ENCODE measurements at regions of chr9 and their contacts with region 1.

Region 1: DNA sequence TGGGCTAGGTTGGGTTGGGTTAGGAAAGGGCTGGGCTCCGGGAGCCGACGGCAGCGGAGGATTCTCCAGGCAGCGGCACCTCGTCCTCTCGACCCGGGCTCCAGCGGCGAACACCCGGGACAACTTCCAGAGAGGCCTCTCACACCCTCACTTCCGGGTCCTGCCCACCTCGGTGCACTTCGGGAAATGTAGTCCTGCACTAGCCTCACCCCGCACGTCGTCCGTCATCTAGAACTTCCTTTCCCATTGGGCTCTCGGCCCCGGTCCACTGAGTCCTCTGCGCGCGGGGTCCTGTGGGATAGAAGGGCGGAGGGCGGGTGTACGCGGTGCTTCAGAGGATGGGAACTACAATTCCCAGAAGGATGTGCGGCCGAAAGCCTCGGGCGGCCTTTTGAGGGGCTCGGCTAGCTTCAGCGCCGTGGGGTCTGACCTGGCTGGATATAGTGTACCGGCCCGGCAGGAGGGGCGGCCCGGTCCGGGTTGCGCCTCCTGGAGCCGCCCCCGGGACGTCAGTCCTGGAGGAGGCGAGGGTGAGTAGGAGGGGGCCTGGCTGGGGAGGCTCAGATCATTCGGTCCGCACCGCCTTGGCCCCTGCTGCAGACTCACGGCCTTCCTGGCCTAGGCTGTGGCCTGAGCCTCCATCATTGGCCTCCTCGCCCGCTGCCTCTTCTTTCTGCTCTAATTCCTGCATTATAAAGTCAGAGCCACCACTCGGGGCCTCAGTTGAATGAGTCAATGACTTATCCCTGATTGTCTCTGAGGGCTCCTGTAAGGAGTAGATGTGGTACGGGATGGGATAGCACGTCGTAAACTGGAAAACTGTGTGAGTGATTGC is at the starts of genes ERP44 and INVS:
- DNase-seq: peak; percentile 99
- H3K4me3 ChIP-seq: peak within 1 kb of the TSS; percentile 63 to 85 (median 76)
- H3K27ac ChIP-seq: peak within 1 kb of the TSS; percentile 74
- H3K4me1 ChIP-seq: peaks cover 20% of the 10 kb centered on the region
- H3K27me3 ChIP-seq: no peaks in the 10 kb centered on the region
- CTCF ChIP-seq: no peak
- POLR2A ChIP-seq: peak; percentile 93
- total RNA-seq, gene ERP44: 19.3 and 21.4 TPM in 2 replicates
- total RNA-seq, gene INVS: 17.9 and 20.3 TPM in 2 replicates

Region 2: GRCh38 chr9:99221621-99222415 is 877.3 kb before region 1 on chr9 and contains the starts of genes ALG2 and SEC61B:
- CTCF ChIA-PET with region 1: no interaction called
- POLR2A ChIA-PET with region 1: interaction called, 5 read pairs
- dilution Hi-C with region 1: no loop called
- intact Hi-C with region 1: loop called (anchors 1 kb)
- DNase-seq: peak; percentile 97
- H3K4me3 ChIP-seq: peak within 1 kb of the TSS; percentile 55 to 98 (median 91)
- H3K27ac ChIP-seq: peak within 1 kb of the TSS; percentile 99
- H3K4me1 ChIP-seq: peaks cover 28% of the 10 kb centered on the region
- H3K27me3 ChIP-seq: no peaks in the 10 kb centered on the region
- CTCF ChIP-seq: no peak
- POLR2A ChIP-seq: peak; percentile 93
- total RNA-seq, gene ALG2: 31.4 and 32.4 TPM in 2 replicates
- total RNA-seq, gene SEC61B: 241 and 242 TPM in 2 replicates

Region 3: GRCh38 chr9:99921875-99922710 is 177.0 kb before region 1 on chr9:
- CTCF ChIA-PET with region 1: no interaction called
- POLR2A ChIA-PET with region 1: no interaction called
- dilution Hi-C with region 1: no loop called
- intact Hi-C with region 1: no loop called
- DNase-seq: no peak
- H3K4me3 ChIP-seq: no peak overlapping the region
- H3K27ac ChIP-seq: no peak overlapping the region
- H3K4me1 ChIP-seq: no peaks in the 10 kb centered on the region
- H3K27me3 ChIP-seq: no peaks in the 10 kb centered on the region
- CTCF ChIP-seq: no peak
- POLR2A ChIP-seq: no peak

Region 4: GRCh38 chr9:100063185-100063584 is 35.9 kb before region 1 on chr9:
- CTCF ChIA-PET with region 1: interaction called, 3 read pairs
- POLR2A ChIA-PET with region 1: no interaction called
- dilution Hi-C with region 1: no loop called
- intact Hi-C with region 1: loop called (anchors 1 kb)
- DNase-seq: peak; percentile 53
- H3K4me3 ChIP-seq: no peak overlapping the region
- H3K27ac ChIP-seq: no peak overlapping the region
- H3K4me1 ChIP-seq: peaks cover 3% of the 10 kb centered on the region
- H3K27me3 ChIP-seq: no peaks in the 10 kb centered on the region
- CTCF ChIP-seq: no peak
- POLR2A ChIP-seq: no peak

Region 5: GRCh38 chr9:100084734-100085133 is 14.4 kb before region 1 on chr9:
- CTCF ChIA-PET with region 1: interaction called, 5 read pairs
- POLR2A ChIA-PET with region 1: interaction called, 4 read pairs
- dilution Hi-C with region 1: no loop called
- intact Hi-C with region 1: loop called (anchors 1 kb)
- DNase-seq: no peak
- H3K4me3 ChIP-seq: no peak overlapping the region
- H3K27ac ChIP-seq: no peak overlapping the region
- H3K4me1 ChIP-seq: peaks cover 33% of the 10 kb centered on the region
- H3K27me3 ChIP-seq: no peaks in the 10 kb centered on the region
- CTCF ChIP-seq: no peak
- POLR2A ChIP-seq: no peak

Region 6: GRCh38 chr9:100206899-100207298 is 107.8 kb after region 1 on chr9:
- CTCF ChIA-PET with region 1: no interaction called
- POLR2A ChIA-PET with region 1: no interaction called
- dilution Hi-C with region 1: no loop called
- intact Hi-C with region 1: loop called (anchors 2 kb)
- DNase-seq: peak; percentile 81
- H3K4me3 ChIP-seq: peak overlapping the region in 1 of 3 experiments; percentile 32
- H3K27ac ChIP-seq: peak overlapping the region; percentile 41
- H3K4me1 ChIP-seq: peaks cover 24% of the 10 kb centered on the region
- H3K27me3 ChIP-seq: no peaks in the 10 kb centered on the region
- CTCF ChIP-seq: no peak
- POLR2A ChIP-seq: no peak

Measured in endothelial cell of umbilical vein (primary cell).